ENCODE measurements at regions of chr11 and their contacts with region 1.

Region 1: DNA sequence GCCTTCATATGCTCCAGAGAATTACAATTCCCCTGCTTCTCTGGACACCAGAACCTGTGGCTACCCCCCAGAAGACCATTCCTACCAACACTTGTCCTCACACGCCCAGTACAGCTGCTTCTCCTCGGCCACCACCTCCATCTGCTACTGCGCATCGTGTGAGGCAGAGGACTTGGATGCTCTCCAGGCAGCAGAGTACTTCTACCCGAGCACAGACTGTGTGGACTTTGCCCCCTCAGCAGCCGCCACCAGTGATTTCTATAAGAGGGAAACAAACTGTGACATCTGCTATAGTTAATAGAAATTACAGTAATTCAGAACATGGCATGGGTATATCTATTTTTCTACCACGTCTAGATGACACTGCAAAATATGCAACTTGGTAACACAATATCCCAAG is 9.8 kb downstream of the POU2AF3 start:
- DNase-seq: peak; percentile 92
- H3K4me3 ChIP-seq: no peak overlapping the region
- H3K27ac ChIP-seq: no peak overlapping the region
- H3K4me1 ChIP-seq: no peaks in the 10 kb centered on the region
- H3K27me3 ChIP-seq: no peaks in the 10 kb centered on the region
- CTCF ChIP-seq: no peak

Region 2: GRCh38 chr11:111359223-111360149 is 51.3 kb after region 1 on chr11:
- intact Hi-C with region 1: loop called (anchors 2 kb)
- DNase-seq: no peak
- H3K4me3 ChIP-seq: no peak overlapping the region
- H3K27ac ChIP-seq: peak overlapping the region; percentile 70
- H3K4me1 ChIP-seq: no peaks in the 10 kb centered on the region
- H3K27me3 ChIP-seq: no peaks in the 10 kb centered on the region
- CTCF ChIP-seq: no peak

Measured in colonic mucosa (tissue), 4 donors.